ENCODE measurements at regions of chrX and their contacts with region 1.

Region 1: GRCh38 chrX:119266364-119266995 is 30.4 kb downstream of the PGRMC1 start:
- DNase-seq: peak in 5 of 9 experiments; percentile 7 to 43 (median 25)
- ATAC-seq: no peak
- H3K4me3 ChIP-seq: no peak overlapping the region
- H3K4me3 Mint-ChIP-seq: no peak overlapping the region
- H3K27ac ChIP-seq: no peak overlapping the region
- H3K27ac Mint-ChIP-seq: no peak overlapping the region
- H3K4me1 ChIP-seq: no peaks in the 10 kb centered on the region
- H3K4me1 Mint-ChIP-seq: no peaks in the 10 kb centered on the region
- H3K27me3 ChIP-seq: no peaks in the 10 kb centered on the region
- H3K27me3 Mint-ChIP-seq: peaks cover 2% of the 10 kb centered on the region
- CTCF ChIP-seq: peak; percentile 61

Region 2: DNA sequence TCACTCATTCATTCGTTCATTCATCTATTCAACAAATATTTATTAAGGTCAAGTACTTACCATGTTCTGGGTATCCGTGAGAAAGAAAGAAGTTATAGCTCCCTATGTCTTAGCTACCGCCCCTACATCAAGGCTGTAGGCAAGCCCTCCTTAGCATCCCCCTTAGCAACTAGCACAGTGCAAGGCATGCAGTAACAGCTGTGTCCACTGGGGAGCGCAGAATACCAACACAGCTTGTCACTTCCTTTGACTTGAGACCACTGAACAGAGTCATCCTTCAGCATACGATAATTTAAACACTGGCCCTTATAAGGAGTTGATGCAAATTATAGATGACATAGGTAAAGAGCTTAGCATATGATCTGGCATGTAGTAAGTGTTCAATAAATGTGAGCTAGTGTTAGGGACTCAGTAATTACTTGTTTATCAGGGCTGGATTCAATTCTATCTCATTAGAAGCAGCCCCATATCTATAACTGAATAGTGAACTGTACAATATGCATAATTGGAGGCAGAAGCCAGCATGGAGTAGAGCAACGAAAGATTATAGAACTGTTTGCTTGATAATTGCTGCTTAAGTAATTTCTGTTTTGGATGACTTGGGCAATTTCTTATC is 147.6 kb before region 1 on chrX:
- CTCF ChIA-PET with region 1: interaction called, 12 read pairs
- POLR2A ChIA-PET with region 1: no interaction called
- intact Hi-C with region 1: loop called in 1 of 2 experiments (anchors 1 kb)
- DNase-seq: peak; percentile 29 to 68 (median 48)
- ATAC-seq: peak; percentile 85
- H3K4me3 ChIP-seq: no peak overlapping the region
- H3K4me3 Mint-ChIP-seq: no peak overlapping the region
- H3K27ac ChIP-seq: no peak overlapping the region
- H3K27ac Mint-ChIP-seq: no peak overlapping the region
- H3K4me1 ChIP-seq: no peaks in the 10 kb centered on the region
- H3K4me1 Mint-ChIP-seq: no peaks in the 10 kb centered on the region
- H3K27me3 ChIP-seq: no peaks in the 10 kb centered on the region
- H3K27me3 Mint-ChIP-seq: no peaks in the 10 kb centered on the region
- CTCF ChIP-seq: peak; percentile 69